ENCODE measurements at regions of chr17 and their contacts with region 1.

Region 1: DNA sequence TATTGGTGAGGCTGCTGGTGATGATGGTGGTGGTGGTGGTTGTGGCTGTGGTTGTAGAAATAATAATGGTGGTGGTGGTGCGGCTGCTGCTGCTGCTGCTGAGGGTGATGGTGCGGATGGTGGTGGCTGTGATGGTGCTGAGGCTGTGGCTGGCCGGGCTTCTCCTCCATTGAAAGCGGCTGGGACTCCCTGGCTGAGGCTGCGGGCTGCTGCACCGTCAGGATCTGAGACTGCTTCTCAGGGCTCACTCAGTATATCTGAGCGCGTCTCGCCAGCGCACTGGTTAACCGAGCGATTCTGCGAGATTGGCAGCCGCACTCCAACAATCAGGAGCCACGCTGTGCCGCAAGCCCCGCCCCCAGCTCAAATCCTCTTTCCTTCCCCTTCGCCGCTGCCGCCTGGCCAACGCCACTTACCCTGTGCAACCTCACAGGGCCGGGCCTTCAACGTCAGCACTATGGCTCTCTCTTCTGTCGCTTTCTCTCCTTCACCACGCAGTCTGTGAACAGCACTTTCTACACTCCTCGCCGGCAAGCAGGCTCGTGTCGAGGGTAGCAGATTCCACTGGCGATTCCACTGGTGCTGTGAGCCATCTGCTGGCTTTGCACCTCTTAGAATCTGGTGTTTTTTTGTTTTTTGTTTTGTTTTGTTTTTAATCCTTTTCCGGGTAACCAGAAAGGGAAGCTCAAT is at the start of gene NUFIP2:
- DNase-seq: peak; percentile 100
- H3K4me3 ChIP-seq: peak within 1 kb of the TSS; percentile 87 to 98 (median 92)
- H3K27ac ChIP-seq: peak within 1 kb of the TSS; percentile 96 to 100 (median 100)
- H3K4me1 ChIP-seq: peaks cover 0 to 36% (median 35%) of the 10 kb centered on the region in 4 donors
- H3K27me3 ChIP-seq: no peaks in the 10 kb centered on the region
- CTCF ChIP-seq: no peak
- EP300 ChIP-seq: no peak
- POLR2A ChIP-seq: peak; percentile 99 to 100
- total RNA-seq, gene NUFIP2: 26.5 to 30.7 (median 27.4) TPM

Region 2: DNA sequence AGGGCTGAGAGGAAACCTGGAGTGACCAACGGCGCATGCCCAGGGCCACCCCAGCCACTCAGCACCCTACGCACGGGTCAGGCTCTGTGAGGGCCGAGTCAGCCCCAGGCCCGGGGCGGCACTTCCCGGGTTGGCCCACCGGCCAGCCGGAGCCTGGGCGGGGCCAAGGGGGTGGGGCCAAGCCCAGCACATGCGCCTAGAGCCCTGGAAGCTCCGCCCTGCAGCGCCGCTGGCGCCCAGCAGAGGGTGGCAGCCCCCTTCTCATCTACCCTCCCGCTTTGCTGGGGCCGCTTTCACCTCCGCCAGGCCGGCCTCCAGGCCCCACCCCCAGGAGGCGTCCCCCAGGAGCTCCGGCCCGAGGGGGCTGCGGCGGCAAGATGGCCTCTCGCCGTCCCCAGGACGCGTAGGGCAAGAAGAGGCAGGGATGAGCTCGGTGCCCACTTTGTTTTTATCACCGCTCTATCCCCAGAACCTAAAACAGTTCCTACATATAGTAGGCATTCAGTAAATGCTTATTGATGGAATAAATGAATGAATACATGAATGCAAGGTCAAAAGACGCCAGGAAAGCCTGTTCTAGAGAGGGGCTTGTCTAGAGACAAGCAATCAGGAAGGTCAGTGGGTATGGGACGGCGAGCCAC is 145.1 kb before region 1 on chr17:
- intact Hi-C with region 1: loop called (anchors 1 kb)
- DNase-seq: peak; percentile 97
- H3K4me3 ChIP-seq: peak overlapping the region; percentile 39 to 55 (median 49)
- H3K27ac ChIP-seq: peak overlapping the region; percentile 79 to 83 (median 80)
- H3K4me1 ChIP-seq: peaks cover 0 to 31% (median 17%) of the 10 kb centered on the region in 4 donors
- H3K27me3 ChIP-seq: no peaks in the 10 kb centered on the region
- CTCF ChIP-seq: peak; percentile 86 to 97 (median 96)
- EP300 ChIP-seq: no peak
- POLR2A ChIP-seq: no peak

Region 3: GRCh38 chr17:29180034-29180787 is 113.8 kb before region 1 on chr17 and contains the start of gene MYO18A:
- intact Hi-C with region 1: loop called (anchors 2 kb)
- DNase-seq: peak; percentile 87
- H3K4me3 ChIP-seq: peak within 1 kb of the TSS; percentile 43 to 73 (median 70)
- H3K27ac ChIP-seq: peak within 1 kb of the TSS; percentile 83 to 89 (median 86)
- H3K4me1 ChIP-seq: peaks cover 0 to 48% (median 41%) of the 10 kb centered on the region in 4 donors
- H3K27me3 ChIP-seq: no peaks in the 10 kb centered on the region
- CTCF ChIP-seq: peak; percentile 62 to 89 (median 78)
- EP300 ChIP-seq: no peak
- POLR2A ChIP-seq: no peak
- total RNA-seq, gene MYO18A: 28.2 to 90.3 (median 53.4) TPM

Region 4: DNA sequence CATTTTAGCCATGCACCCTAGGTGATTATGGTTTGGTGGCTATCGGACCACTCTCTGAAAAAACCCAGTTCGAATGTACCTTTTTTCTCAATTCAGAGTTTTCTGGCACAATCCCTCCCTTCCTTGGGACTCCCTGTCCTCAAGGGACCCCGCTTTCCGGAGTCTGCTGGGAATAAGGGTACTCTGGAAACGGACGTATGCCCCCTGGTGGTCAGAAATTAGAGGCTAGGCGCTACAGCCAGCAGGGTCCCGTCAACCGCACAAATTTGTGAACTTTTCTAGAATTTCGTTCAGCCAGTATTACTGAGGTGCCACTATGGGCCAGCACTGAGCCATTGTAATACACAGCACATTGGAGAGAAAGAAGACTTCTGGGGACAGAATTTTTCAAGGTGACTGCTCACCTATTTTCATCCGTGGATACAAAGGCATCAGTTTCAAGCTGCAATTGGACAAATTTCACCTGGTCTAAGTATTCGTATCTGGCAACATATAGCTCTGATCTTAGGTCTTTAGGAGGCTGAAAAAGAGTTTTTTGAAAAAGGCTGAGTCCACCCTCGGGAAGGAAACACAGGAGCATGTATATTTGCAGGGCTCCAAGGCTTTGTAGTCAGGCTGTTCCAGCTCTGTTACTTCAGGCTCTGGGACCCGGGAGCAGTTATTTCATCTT is 74.5 kb before region 1 on chr17:
- intact Hi-C with region 1: loop called (anchors 5 kb)
- DNase-seq: peak; percentile 88
- H3K4me3 ChIP-seq: no peak overlapping the region
- H3K27ac ChIP-seq: no peak overlapping the region
- H3K4me1 ChIP-seq: peaks cover 0 to 9% (median 7%) of the 10 kb centered on the region in 4 donors
- H3K27me3 ChIP-seq: no peaks in the 10 kb centered on the region
- CTCF ChIP-seq: peak; percentile 73 to 95 (median 86)
- EP300 ChIP-seq: no peak
- POLR2A ChIP-seq: no peak

Region 5: GRCh38 chr17:29256735-29257466 is 37.1 kb before region 1 on chr17:
- intact Hi-C with region 1: loop called (anchors 2 kb)
- DNase-seq: no peak
- H3K4me3 ChIP-seq: peak overlapping the region in 3 of 4 donors; percentile 26 to 34 (median 29)
- H3K27ac ChIP-seq: peak overlapping the region; percentile 64 to 78 (median 70)
- H3K4me1 ChIP-seq: peaks cover 0 to 48% (median 43%) of the 10 kb centered on the region in 4 donors
- H3K27me3 ChIP-seq: no peaks in the 10 kb centered on the region
- CTCF ChIP-seq: no peak
- EP300 ChIP-seq: no peak
- POLR2A ChIP-seq: no peak

Region 6: GRCh38 chr17:29568331-29569244 is 274.6 kb after region 1 on chr17 and contains the start of gene TP53I13:
- intact Hi-C with region 1: loop called (anchors 5 kb)
- DNase-seq: peak; percentile 93
- H3K4me3 ChIP-seq: peak within 1 kb of the TSS; percentile 57 to 79 (median 60)
- H3K27ac ChIP-seq: peak within 1 kb of the TSS; percentile 86 to 94 (median 90)
- H3K4me1 ChIP-seq: peaks cover 0 to 69% (median 47%) of the 10 kb centered on the region in 4 donors
- H3K27me3 ChIP-seq: no peaks in the 10 kb centered on the region
- CTCF ChIP-seq: no peak
- EP300 ChIP-seq: no peak
- POLR2A ChIP-seq: peak; percentile 26 to 78
- total RNA-seq, gene TP53I13: 28.8 to 41.8 (median 35.4) TPM

Measured in sigmoid colon (tissue), 7 donors.